ENCODE measurements at regions of chr9 and their contacts with region 1.

Region 1: GRCh38 chr9:86282077-86282978 is at the start of gene ISCA1:
- DNase-seq: peak; percentile 80 to 92 (median 82)
- ATAC-seq: peak; percentile 85
- H3K4me3 ChIP-seq: peak within 1 kb of the TSS; percentile 83
- H3K27ac ChIP-seq: peak within 1 kb of the TSS; percentile 94
- H3K4me1 ChIP-seq: peaks cover 21 to 36% of the 10 kb centered on the region in 2 experiments; a peak in 4 of 5 replicates
- H3K27me3 ChIP-seq: no peaks in the 10 kb centered on the region
- CTCF ChIP-seq: no peak
- EP300 ChIP-seq: no peak
- POLR2A ChIP-seq: peak; percentile 92
- RAD21 ChIP-seq: no peak
- polyA plus RNA-seq, gene ISCA1: 6.5 to 11.1 TPM

Region 2: GRCh38 chr9:86354011-86354817 is 71.9 kb after region 1 on chr9 and contains the start of gene TUT7:
- CTCF ChIA-PET with region 1: no interaction called
- POLR2A ChIA-PET with region 1: no interaction called
- in situ Hi-C with region 1: no loop called
- intact Hi-C with region 1: loop called (anchors 2 kb)
- DNase-seq: peak; percentile 85 to 93 (median 86)
- ATAC-seq: peak; percentile 89
- H3K4me3 ChIP-seq: peak within 1 kb of the TSS; percentile 95
- H3K27ac ChIP-seq: peak within 1 kb of the TSS; percentile 93
- H3K4me1 ChIP-seq: peaks cover 5% of the 10 kb centered on the region in 2 experiments; a peak in 4 of 5 replicates
- H3K27me3 ChIP-seq: no peaks in the 10 kb centered on the region
- CTCF ChIP-seq: no peak
- EP300 ChIP-seq: no peak
- POLR2A ChIP-seq: peak; percentile 73
- RAD21 ChIP-seq: no peak
- polyA plus RNA-seq, gene TUT7: 5.9 to 9.3 TPM

Region 3: DNA sequence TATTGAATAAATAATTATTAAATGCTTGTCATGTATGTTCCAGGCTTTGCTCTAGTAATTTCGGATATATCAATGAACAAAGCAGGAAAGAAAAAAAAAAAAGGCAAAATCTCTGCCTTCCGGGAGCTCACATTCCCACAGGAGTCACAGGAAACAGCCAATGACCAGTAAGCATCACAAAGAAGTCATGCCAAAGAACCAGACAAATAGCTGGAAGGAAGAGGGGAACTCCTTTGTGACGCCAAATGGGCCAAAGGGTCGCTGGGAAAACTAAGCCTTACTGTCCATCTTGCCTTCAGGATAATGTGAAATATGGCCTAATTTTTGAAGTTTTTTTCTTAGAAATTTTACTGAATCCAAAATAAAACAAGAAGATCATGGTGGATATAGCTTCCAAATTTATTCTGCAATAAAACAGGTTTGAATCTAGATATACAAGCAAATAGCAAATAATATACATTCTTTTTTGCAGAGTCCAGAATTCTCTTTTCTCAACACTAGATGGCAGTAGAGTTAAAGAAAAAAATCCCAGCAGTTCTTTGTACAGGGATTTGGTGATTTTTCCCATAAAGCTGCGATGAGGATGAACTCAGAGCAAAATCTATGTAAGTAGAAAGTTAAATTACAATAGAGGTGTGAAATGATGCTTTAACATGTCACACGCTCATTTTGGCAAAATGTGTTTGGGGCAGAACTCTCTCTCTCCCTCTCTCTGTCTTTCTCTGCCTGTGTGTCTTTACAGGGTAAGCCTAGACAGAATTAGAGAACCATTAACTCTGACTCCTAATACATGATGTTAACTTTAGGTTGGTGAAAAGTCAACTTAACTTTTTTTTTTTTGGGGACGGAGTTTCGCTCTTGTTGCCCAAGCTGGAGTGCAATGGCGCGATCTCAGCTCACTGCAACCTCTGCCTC is 131.9 kb after region 1 on chr9:
- CTCF ChIA-PET with region 1: no interaction called
- POLR2A ChIA-PET with region 1: no interaction called
- in situ Hi-C with region 1: no loop called
- intact Hi-C with region 1: loop called (anchors 5 kb)
- DNase-seq: peak; percentile 5 to 15 (median 11)
- ATAC-seq: 0 out of 3 replicates have a peak, but pooled peaks have one; percentile 48
- H3K4me3 ChIP-seq: no peak overlapping the region
- H3K27ac ChIP-seq: no peak overlapping the region
- H3K4me1 ChIP-seq: no peaks in the 10 kb centered on the region
- H3K27me3 ChIP-seq: no peaks in the 10 kb centered on the region; a peak in 2 of 5 replicates
- CTCF ChIP-seq: peak; percentile 29 to 56 (median 33); a peak in 4 of 6 replicates
- EP300 ChIP-seq: no peak
- POLR2A ChIP-seq: no peak
- RAD21 ChIP-seq: peak; percentile 35 to 59; a peak in 3 of 4 replicates

Measured in K562 (cell line).